ENCODE measurements at regions of chr11 and their contacts with region 1.

Region 1: GRCh38 chr11:4187055-4187988 is 92.7 kb downstream of the RRM1 start:
- DNase-seq: peak; percentile 88 to 94 (median 90)
- ATAC-seq: peak; percentile 95
- H3K4me3 ChIP-seq: peak overlapping the region; percentile 32 to 42
- H3K27ac ChIP-seq: peak overlapping the region; percentile 13 to 72 (median 51)
- H3K4me1 ChIP-seq: peaks cover 5% of the 10 kb centered on the region
- H3K27me3 ChIP-seq: no peaks in the 10 kb centered on the region
- CTCF ChIP-seq: peak; percentile 90 to 98 (median 98)
- POLR2A ChIP-seq: peak in 1 of 3 donors; percentile 20

Region 2: GRCh38 chr11:4049006-4049405 is 138.3 kb before region 1 on chr11:
- intact Hi-C with region 1: no loop called
- DNase-seq: peak in 1 of 4 donors; percentile 21
- ATAC-seq: no peak
- H3K4me3 ChIP-seq: no peak overlapping the region
- H3K27ac ChIP-seq: no peak overlapping the region
- H3K4me1 ChIP-seq: no peaks in the 10 kb centered on the region
- H3K27me3 ChIP-seq: no peaks in the 10 kb centered on the region
- CTCF ChIP-seq: no peak
- POLR2A ChIP-seq: no peak

Region 3: DNA sequence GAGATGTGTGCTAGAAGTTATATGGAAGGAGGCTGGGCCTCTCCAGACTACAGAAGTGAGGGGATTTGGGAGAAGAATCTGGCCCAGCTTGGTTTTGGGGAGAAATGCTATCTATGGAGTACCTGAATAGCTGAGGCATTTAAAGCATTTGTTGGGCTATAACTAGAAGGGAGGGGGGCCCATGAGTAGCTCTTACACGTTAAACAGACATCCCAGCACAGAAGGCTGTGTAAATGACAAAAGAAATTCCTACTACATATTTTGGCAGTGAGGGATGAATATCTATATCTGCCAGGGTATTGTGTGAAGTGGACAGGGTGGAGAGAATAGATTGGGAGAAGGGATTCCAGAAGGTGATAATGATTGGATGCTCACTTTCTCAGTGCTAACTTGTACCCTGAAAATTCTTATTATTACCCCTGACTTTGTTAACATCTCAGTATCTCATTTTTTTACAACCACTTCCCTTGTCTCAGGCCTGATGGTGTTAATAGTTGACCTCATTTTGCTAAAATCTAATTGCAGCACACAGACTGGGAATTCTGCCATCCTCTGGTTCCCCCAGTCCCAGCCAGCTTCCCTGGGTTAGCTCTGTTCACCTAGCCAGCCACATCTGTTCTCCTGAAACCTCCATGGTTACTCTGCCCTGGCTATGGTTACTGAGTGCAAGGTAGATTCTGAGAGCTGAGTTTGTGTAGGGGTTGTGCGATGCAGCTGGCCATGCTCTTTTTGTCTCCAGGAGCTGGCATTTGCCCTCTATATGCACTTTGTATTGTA is 121.5 kb before region 1 on chr11:
- intact Hi-C with region 1: no loop called
- DNase-seq: no peak
- ATAC-seq: no peak
- H3K4me3 ChIP-seq: no peak overlapping the region
- H3K27ac ChIP-seq: no peak overlapping the region
- H3K4me1 ChIP-seq: peaks cover 3% of the 10 kb centered on the region
- H3K27me3 ChIP-seq: no peaks in the 10 kb centered on the region
- CTCF ChIP-seq: no peak
- POLR2A ChIP-seq: no peak

Region 4: GRCh38 chr11:4484836-4485235 is 297.5 kb after region 1 on chr11:
- intact Hi-C with region 1: loop called (anchors 5 kb)
- DNase-seq: no peak
- ATAC-seq: no peak
- H3K4me3 ChIP-seq: no peak overlapping the region
- H3K27ac ChIP-seq: no peak overlapping the region
- H3K4me1 ChIP-seq: no peaks in the 10 kb centered on the region
- H3K27me3 ChIP-seq: no peaks in the 10 kb centered on the region
- CTCF ChIP-seq: no peak
- POLR2A ChIP-seq: no peak

Region 5: GRCh38 chr11:4539603-4540219 is 352.4 kb after region 1 on chr11:
- intact Hi-C with region 1: loop called (anchors 5 kb)
- DNase-seq: peak; percentile 52 to 71 (median 60)
- ATAC-seq: peak; percentile 74
- H3K4me3 ChIP-seq: no peak overlapping the region
- H3K27ac ChIP-seq: no peak overlapping the region
- H3K4me1 ChIP-seq: no peaks in the 10 kb centered on the region
- H3K27me3 ChIP-seq: no peaks in the 10 kb centered on the region
- CTCF ChIP-seq: peak; percentile 57 to 65 (median 63)
- POLR2A ChIP-seq: no peak

Region 6: GRCh38 chr11:5004424-5005274 is 817.3 kb after region 1 on chr11:
- intact Hi-C with region 1: loop called (anchors 10 kb)
- DNase-seq: peak; percentile 61 to 83 (median 70)
- ATAC-seq: peak; percentile 65
- H3K4me3 ChIP-seq: no peak overlapping the region
- H3K27ac ChIP-seq: no peak overlapping the region
- H3K4me1 ChIP-seq: no peaks in the 10 kb centered on the region
- H3K27me3 ChIP-seq: no peaks in the 10 kb centered on the region
- CTCF ChIP-seq: peak in 6 of 7 experiments; percentile 56 to 79 (median 63)
- POLR2A ChIP-seq: no peak